Panc1 (cell line): ENCODE measurements at regions of chr9 and their contacts with region 1.

Region 1: GRCh38 chr9:129177791-129178559 is at the start of gene IER5L:
- DNase-seq: no peak
- ATAC-seq: peak; percentile 84
- H3K4me3 ChIP-seq: peak within 1 kb of the TSS; percentile 74 to 81
- H3K27ac ChIP-seq: peak within 1 kb of the TSS; percentile 95; the same call in 1 of the 2 replicates
- H3K4me1 ChIP-seq: peaks cover 17% of the 10 kb centered on the region
- H3K27me3 ChIP-seq: no peaks in the 10 kb centered on the region
- CTCF ChIP-seq: peak; percentile 0; the same call in 1 of the 2 replicates
- total RNA-seq, gene IER5L: 44.6 TPM

Region 2: DNA sequence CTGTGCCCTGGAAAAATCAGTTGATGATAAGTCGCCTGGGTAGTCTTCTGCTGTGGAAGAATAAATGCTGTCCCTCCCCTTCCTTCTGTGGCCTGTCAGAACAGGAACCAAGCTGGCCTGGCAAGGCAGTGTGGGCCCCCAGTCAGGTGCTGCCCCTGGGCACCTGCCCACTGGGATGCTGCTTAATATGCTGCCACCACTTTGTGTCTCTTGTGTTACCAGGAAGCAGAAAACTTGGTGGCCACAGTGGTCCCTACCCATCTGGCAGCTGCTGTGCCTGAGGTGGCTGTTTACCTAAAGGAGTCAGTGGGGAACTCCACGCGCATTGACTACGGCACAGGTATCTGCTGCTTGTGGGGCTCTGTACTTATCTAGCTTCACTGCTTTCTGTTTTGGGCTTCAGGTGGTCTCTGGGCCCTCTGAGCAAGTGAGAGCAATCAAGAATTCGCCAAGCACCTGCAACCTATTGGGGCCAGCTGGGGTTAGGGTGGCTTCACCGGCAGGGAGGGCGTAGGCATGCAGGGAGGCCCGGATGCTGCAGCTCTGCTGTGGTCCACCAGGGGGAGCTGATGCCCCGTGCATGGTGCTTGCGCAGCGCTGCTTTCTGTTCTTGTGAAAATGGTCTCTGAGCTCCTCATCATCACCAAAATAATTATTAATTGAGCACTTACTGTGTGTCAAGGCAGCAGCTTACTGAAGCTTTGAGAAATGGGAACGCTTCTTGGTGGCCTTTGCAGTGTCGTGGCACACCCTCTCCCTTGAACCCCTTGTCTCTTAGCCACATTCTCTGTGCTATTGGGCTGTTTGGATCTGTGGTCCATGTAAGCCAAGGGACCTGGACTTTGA is 46.5 kb before region 1 on chr9:
- CTCF ChIA-PET with region 1: interaction called, 5 read pairs
- POLR2A ChIA-PET with region 1: interaction called, 12 read pairs
- in situ Hi-C with region 1: no loop called
- intact Hi-C with region 1: no loop called
- DNase-seq: no peak
- ATAC-seq: peak; percentile 95
- H3K4me3 ChIP-seq: no peak overlapping the region
- H3K27ac ChIP-seq: no peak overlapping the region
- H3K4me1 ChIP-seq: no peaks in the 10 kb centered on the region
- H3K27me3 ChIP-seq: no peaks in the 10 kb centered on the region
- CTCF ChIP-seq: peak; percentile 95

Region 3: GRCh38 chr9:129139993-129140396 is 38.0 kb before region 1 on chr9:
- CTCF ChIA-PET with region 1: interaction called, 14 read pairs
- POLR2A ChIA-PET with region 1: interaction called, 9 read pairs
- in situ Hi-C with region 1: no loop called
- intact Hi-C with region 1: no loop called
- DNase-seq: no peak
- ATAC-seq: peak; percentile 69
- H3K4me3 ChIP-seq: peak overlapping the region; percentile 19 to 42
- H3K27ac ChIP-seq: peak overlapping the region; percentile 95
- H3K4me1 ChIP-seq: peaks cover 28% of the 10 kb centered on the region
- H3K27me3 ChIP-seq: no peaks in the 10 kb centered on the region
- CTCF ChIP-seq: no peak

Region 4: DNA sequence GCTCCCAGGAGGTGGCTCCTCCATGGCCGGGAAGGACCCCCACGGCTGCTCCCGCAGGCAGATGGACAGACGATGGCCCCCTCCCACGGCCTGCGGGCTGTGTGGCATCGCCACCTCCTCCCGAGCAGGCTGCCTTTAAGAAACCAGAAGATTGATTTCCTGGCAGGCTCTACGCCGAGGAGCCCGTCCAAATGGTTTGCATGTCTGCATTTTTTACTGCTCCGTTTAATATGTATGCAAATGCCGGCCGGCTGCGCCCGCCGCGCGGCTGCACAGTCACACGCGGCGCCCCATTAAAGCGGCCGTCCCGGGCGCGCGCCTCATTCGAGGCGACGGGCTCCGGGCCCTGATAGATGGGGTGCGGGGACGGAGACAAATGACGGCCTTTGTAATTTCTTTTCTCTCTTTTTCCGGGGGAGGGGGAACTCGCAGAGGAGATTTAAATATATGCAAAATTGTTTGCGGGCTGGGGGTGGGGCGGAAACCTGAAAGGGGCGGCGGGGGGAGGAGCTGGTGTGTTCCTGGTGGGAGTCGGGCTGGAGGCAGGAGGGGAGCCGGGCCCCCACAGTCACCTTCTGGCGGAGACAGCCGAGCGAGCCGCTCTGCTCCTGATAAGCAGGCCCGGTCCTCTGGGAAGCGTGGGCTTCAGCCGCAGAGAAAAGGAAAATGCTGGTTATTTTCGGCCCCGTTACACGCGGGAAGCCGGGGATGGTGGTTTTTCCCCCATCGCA is 158.8 kb after region 1 on chr9:
- CTCF ChIA-PET with region 1: interaction called, 3 read pairs
- POLR2A ChIA-PET with region 1: interaction called, 3 read pairs
- in situ Hi-C with region 1: no loop called
- intact Hi-C with region 1: loop called (anchors 5 kb)
- DNase-seq: no peak
- ATAC-seq: peak; percentile 5; the same call in 1 of the 2 replicates
- H3K4me3 ChIP-seq: peak overlapping the region; percentile 25 to 29
- H3K27ac ChIP-seq: peak overlapping the region; percentile 94
- H3K4me1 ChIP-seq: peaks cover 49% of the 10 kb centered on the region
- H3K27me3 ChIP-seq: no peaks in the 10 kb centered on the region
- CTCF ChIP-seq: no peak

Region 5: DNA sequence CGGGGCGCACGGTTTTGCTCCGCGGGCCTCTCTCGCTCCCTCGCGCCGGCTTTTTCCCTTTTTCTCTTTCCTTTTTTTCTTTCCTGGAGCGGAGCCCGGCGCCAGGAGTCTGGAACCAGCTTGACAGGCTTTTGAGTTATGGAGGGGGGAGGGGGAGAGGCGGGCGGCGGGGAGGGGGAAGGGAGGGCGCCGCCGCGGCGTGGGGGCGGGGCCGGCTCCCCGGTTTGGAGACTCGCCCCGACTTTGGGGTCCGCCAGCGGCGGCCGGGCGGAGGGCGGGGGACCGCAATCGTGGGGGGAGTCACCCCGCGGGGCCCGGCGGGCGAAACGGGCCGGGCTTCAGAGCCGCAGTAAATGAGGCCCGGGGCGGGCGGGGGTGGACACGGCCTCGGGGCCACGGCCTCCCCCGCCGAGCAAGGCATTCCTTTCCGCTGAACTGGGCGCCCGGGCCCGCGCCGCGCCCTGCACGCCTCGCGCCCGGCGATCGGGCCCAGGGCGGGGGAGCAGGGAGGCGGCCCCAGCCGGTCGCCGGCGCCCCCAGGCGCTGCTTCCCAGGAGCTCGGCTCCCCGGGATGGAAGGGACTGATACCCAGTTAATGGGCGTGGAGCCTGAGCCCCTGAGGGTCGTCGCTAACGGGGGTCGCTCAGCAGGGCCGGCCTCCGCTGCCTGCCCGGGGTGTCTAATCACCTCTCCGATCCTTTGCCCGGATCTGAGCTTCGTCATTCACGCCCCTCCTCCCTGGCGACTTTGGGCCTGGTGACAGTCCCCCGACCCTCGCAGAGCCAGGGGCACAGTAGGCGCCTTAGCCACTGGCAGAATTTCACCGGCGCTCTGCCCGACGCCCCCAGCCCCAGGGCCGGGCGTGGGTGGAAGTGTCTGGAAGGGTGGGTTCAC is 304.8 kb after region 1 on chr9:
- CTCF ChIA-PET with region 1: interaction called, 8 read pairs
- POLR2A ChIA-PET with region 1: interaction called, 10 read pairs
- in situ Hi-C with region 1: no loop called
- intact Hi-C with region 1: loop called (anchors 5 kb)
- DNase-seq: no peak
- ATAC-seq: peak; percentile 70
- H3K4me3 ChIP-seq: peak overlapping the region; percentile 4 to 11; a peak in 2 of 4 replicates
- H3K27ac ChIP-seq: peak overlapping the region; percentile 98
- H3K4me1 ChIP-seq: peaks cover 81% of the 10 kb centered on the region
- H3K27me3 ChIP-seq: no peaks in the 10 kb centered on the region
- CTCF ChIP-seq: no peak

Region 6: DNA sequence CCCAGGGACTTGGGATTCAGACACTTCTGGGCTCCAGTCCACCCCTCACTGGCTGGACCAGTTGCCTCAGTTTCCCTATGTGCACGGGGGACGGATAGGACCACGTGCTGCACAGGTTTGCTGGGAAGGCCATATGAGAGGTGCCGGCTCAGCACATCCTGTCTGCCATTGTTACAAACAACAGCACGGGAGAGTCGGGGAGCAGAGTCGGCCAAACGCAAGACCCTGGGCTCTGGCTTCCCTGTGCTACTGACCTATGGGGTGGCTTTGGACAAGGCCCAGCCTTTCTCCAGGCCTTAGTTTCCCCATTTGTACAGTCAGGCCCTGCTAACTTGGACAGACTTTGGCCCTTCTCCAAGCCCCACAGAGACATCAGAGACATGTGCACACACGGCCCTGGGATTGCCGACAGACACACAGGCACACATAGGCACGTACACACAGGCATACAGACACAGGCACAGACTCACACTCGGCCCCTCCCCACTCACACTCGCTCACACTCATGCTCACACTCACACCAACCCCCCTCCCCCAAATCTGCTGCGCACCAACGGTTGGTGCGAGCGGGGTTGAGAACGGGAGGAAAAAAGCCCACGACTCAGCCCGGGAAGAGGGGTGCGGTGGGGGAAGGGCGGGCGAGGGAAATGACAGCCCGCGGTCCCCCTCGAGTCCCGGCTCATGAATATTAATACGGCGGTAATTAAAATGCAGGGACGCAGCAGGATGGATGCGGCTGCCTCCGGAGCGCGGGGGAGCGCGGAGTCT is 309.9 kb after region 1 on chr9:
- CTCF ChIA-PET with region 1: interaction called, 8 read pairs
- POLR2A ChIA-PET with region 1: interaction called, 3 read pairs
- in situ Hi-C with region 1: no loop called
- intact Hi-C with region 1: loop called (anchors 5 kb)
- DNase-seq: no peak
- ATAC-seq: peak; percentile 9
- H3K4me3 ChIP-seq: peak overlapping the region in 1 of 2 experiments; percentile 14; a peak in 1 of 4 replicates
- H3K27ac ChIP-seq: peak overlapping the region; percentile 98
- H3K4me1 ChIP-seq: peaks cover 73% of the 10 kb centered on the region
- H3K27me3 ChIP-seq: no peaks in the 10 kb centered on the region
- CTCF ChIP-seq: no peak

Region 7: DNA sequence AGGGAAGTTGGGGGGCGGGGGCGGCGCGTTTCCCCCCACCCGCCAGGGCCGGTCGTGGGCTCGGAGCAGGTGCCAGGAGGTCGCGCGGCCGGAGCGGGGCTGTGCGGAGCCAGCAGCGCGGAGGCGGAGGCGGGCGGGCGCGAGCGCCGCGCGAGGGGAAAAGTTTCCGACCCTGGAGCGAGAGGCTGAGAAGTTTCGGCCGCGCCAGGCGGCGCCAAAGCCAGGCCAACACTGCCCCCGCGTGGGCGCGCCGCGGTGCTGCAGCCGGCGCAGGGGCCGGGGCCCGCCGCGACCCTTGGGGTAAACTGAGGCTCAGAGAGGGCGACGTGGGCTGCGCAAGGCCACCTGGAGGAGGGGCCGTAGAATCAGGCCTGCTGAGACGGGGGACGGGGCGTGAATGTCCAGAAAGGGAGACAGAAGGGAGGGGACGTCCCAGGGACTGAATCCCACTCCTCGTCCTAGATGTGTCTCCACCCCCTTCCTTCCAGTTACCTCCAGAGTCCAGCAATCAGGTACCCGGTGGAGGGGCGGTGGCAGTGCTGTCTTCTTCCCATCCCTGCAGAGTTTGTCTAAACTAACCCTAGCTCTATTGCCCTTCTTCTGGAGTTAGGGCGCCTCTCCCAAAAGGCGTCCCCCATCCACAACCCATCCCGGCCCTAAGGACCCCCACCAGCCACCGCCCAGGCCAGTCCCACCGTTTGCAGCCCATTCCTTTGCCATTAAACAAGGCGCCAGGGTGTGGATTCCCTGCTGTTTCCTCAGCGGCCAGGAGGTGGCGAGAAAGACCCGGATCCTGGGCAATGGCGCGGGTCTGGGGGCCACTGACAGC is 432.7 kb after region 1 on chr9:
- CTCF ChIA-PET with region 1: interaction called, 6 read pairs
- POLR2A ChIA-PET with region 1: interaction called, 3 read pairs
- in situ Hi-C with region 1: no loop called
- intact Hi-C with region 1: loop called (anchors 5 kb)
- DNase-seq: no peak
- ATAC-seq: peak; percentile 68
- H3K4me3 ChIP-seq: peak overlapping the region; percentile 51 to 61
- H3K27ac ChIP-seq: peak overlapping the region; percentile 72
- H3K4me1 ChIP-seq: peaks cover 20% of the 10 kb centered on the region
- H3K27me3 ChIP-seq: no peaks in the 10 kb centered on the region
- CTCF ChIP-seq: peak; percentile 83